IMR-90 (cell line): ENCODE measurements at regions of chr11 and their contacts with region 1.

Region 1: GRCh38 chr11:15714641-15715399 is 600.1 kb downstream of the INSC start:
- DNase-seq: peak; percentile 60
- ATAC-seq: peak; percentile 58
- H3K4me3 ChIP-seq: no peak overlapping the region
- H3K27ac ChIP-seq: peak overlapping the region; percentile 64; the same call in 1 of the 2 replicates
- H3K4me1 ChIP-seq: peaks cover 16% of the 10 kb centered on the region
- H3K27me3 ChIP-seq: no peaks in the 10 kb centered on the region; the same call in 1 of the 2 replicates
- CTCF ChIP-seq: no peak
- POLR2A ChIP-seq: no peak
- RAD21 ChIP-seq: no peak

Region 2: GRCh38 chr11:15665368-15665871 is 49.4 kb before region 1 on chr11:
- CTCF ChIA-PET with region 1: interaction called, 3 read pairs
- POLR2A ChIA-PET with region 1: interaction called, 3 read pairs
- dilution Hi-C with region 1: no loop called
- in situ Hi-C with region 1: no loop called
- intact Hi-C with region 1: loop called (anchors 5 kb)
- DNase-seq: peak; percentile 72
- ATAC-seq: peak; percentile 69
- H3K4me3 ChIP-seq: no peak overlapping the region
- H3K27ac ChIP-seq: peak overlapping the region; percentile 23; the same call in 1 of the 2 replicates
- H3K4me1 ChIP-seq: peaks cover 7% of the 10 kb centered on the region
- H3K27me3 ChIP-seq: no peaks in the 10 kb centered on the region
- CTCF ChIP-seq: no peak
- POLR2A ChIP-seq: no peak
- RAD21 ChIP-seq: no peak

Region 3: GRCh38 chr11:15969281-15969680 is 254.5 kb after region 1 on chr11:
- CTCF ChIA-PET with region 1: no interaction called
- POLR2A ChIA-PET with region 1: no interaction called
- dilution Hi-C with region 1: no loop called
- in situ Hi-C with region 1: no loop called
- intact Hi-C with region 1: no loop called
- DNase-seq: peak; percentile 93
- ATAC-seq: peak; percentile 92
- H3K4me3 ChIP-seq: no peak overlapping the region
- H3K27ac ChIP-seq: peak overlapping the region; percentile 69
- H3K4me1 ChIP-seq: peaks cover 9% of the 10 kb centered on the region
- H3K27me3 ChIP-seq: no peaks in the 10 kb centered on the region
- CTCF ChIP-seq: no peak
- POLR2A ChIP-seq: no peak; the same call in 1 of the 2 replicates
- RAD21 ChIP-seq: peak; percentile 29; the same call in 1 of the 2 replicates

Region 4: GRCh38 chr11:16191212-16191867 is 476.5 kb after region 1 on chr11:
- CTCF ChIA-PET with region 1: no interaction called
- POLR2A ChIA-PET with region 1: no interaction called
- dilution Hi-C with region 1: no loop called
- in situ Hi-C with region 1: no loop called
- intact Hi-C with region 1: loop called (anchors 5 kb)
- DNase-seq: peak; percentile 18
- ATAC-seq: no peak
- H3K4me3 ChIP-seq: no peak overlapping the region
- H3K27ac ChIP-seq: no peak overlapping the region
- H3K4me1 ChIP-seq: peaks cover 5% of the 10 kb centered on the region
- H3K27me3 ChIP-seq: no peaks in the 10 kb centered on the region
- CTCF ChIP-seq: no peak
- POLR2A ChIP-seq: no peak
- RAD21 ChIP-seq: no peak